PC-3 (cell line): ENCODE measurements at regions of chr2 and their contacts with region 1.

Region 1: GRCh38 chr2:100818606-100819369 is 1.2 kb upstream of the NPAS2 start:
- DNase-seq: peak; percentile 79
- ATAC-seq: peak; percentile 55
- H3K4me3 ChIP-seq: peak overlapping the region; percentile 76
- H3K27ac ChIP-seq: peak overlapping the region; percentile 93
- H3K4me1 ChIP-seq: peaks cover 36% of the 10 kb centered on the region
- H3K27me3 ChIP-seq: no peaks in the 10 kb centered on the region
- CTCF ChIP-seq: peak; percentile 60

Region 2: DNA sequence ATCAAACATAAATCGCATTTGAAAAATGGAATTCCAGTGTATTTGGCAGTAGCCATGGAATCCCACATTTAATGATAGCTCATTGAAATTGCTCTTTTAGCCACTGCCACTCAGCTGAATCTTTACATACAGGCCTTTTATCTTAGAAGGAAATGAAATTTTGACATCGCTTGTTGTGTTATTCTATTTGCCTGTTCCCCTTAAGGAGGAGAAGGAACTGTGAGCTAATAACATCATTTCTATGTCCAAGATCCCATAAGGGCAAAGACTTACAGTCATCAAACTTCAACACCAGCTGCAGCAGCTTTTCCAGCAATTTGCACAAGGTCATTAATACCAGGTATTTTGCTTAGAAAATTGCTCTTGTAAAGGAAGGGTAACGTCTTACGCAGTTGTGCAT is 262.0 kb before region 1 on chr2:
- CTCF ChIA-PET with region 1: no interaction called
- POLR2A ChIA-PET with region 1: no interaction called
- intact Hi-C with region 1: no loop called
- DNase-seq: no peak
- ATAC-seq: no peak
- H3K4me3 ChIP-seq: no peak overlapping the region
- H3K27ac ChIP-seq: no peak overlapping the region
- H3K4me1 ChIP-seq: peaks cover 8% of the 10 kb centered on the region
- H3K27me3 ChIP-seq: no peaks in the 10 kb centered on the region
- CTCF ChIP-seq: no peak

Region 3: DNA sequence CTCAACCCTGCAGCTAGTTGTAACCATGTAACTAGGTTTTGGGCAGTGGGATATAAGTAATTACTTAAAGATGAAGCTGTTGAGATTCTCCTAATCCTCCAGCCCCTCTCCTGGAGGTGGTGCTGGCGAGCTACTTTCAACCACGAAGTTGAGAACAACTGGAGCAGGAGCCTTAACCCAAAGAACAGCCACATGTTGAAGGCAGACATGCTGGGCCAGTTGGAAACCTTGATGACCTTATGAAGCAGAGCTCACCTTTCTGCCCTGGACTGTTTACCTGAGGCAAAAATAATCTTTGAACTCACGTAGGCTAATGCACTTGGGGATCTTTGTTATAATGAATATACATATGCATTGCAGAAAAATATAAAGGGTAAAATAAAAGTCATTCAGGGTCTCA is 88.4 kb before region 1 on chr2:
- CTCF ChIA-PET with region 1: interaction called, 23 read pairs
- POLR2A ChIA-PET with region 1: no interaction called
- intact Hi-C with region 1: loop called (anchors 1 kb)
- DNase-seq: peak; percentile 88
- ATAC-seq: peak; percentile 60
- H3K4me3 ChIP-seq: no peak overlapping the region
- H3K27ac ChIP-seq: peak overlapping the region; percentile 12; the same call in 1 of the 2 replicates
- H3K4me1 ChIP-seq: peaks cover 29% of the 10 kb centered on the region
- H3K27me3 ChIP-seq: no peaks in the 10 kb centered on the region
- CTCF ChIP-seq: peak; percentile 92

Region 4: DNA sequence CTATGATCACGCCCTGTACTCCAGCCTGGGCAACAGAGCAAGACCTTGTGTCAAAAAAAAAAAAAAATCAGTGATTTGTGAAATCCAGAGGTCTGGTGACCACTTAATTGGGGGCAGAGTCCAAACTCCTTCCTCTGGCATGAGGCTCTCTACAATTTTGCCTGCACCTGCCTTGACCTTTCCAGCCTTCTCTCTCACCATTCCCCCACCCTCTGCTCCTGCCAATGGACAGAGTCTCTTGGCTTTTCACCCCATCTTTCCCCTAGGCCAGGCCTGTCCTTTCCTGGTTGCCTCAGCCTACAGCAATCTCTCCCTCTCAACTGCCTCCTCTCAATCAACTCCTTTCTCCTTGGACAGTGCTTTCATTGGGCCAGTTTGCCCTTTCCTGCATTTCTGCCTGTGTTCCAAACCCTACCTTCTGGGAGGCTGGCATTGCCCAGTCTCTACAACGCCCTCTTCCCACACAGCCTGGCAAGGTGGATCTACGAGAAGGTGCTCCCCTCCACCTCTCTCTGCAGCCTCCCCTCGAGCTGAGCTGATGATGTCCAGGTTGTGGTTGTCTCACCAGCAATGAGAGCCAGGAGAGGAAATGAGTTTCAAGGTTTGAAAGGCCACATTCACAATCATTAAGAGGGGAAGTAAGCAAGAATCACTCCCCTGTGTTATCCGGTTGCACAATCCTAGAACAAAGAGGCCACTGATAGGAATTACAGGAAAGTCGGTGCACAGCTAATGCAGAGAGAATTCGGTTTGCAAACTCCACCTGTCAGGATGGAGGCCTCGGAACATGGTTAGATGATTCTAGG is 38.4 kb before region 1 on chr2:
- CTCF ChIA-PET with region 1: no interaction called
- POLR2A ChIA-PET with region 1: interaction called, 14 read pairs
- intact Hi-C with region 1: loop called (anchors 1 kb)
- DNase-seq: peak; percentile 96
- ATAC-seq: peak; percentile 84
- H3K4me3 ChIP-seq: no peak overlapping the region; the same call in 1 of the 2 replicates
- H3K27ac ChIP-seq: peak overlapping the region; percentile 99
- H3K4me1 ChIP-seq: peaks cover 48% of the 10 kb centered on the region
- H3K27me3 ChIP-seq: no peaks in the 10 kb centered on the region
- CTCF ChIP-seq: no peak

Region 5: GRCh38 chr2:100832885-100833284 is 14.1 kb after region 1 on chr2:
- CTCF ChIA-PET with region 1: interaction called, 3 read pairs
- POLR2A ChIA-PET with region 1: interaction called, 12 read pairs
- intact Hi-C with region 1: no loop called
- DNase-seq: peak; percentile 26
- ATAC-seq: peak; percentile 58
- H3K4me3 ChIP-seq: no peak overlapping the region
- H3K27ac ChIP-seq: no peak overlapping the region
- H3K4me1 ChIP-seq: peaks cover 15% of the 10 kb centered on the region
- H3K27me3 ChIP-seq: no peaks in the 10 kb centered on the region
- CTCF ChIP-seq: no peak

Region 6: DNA sequence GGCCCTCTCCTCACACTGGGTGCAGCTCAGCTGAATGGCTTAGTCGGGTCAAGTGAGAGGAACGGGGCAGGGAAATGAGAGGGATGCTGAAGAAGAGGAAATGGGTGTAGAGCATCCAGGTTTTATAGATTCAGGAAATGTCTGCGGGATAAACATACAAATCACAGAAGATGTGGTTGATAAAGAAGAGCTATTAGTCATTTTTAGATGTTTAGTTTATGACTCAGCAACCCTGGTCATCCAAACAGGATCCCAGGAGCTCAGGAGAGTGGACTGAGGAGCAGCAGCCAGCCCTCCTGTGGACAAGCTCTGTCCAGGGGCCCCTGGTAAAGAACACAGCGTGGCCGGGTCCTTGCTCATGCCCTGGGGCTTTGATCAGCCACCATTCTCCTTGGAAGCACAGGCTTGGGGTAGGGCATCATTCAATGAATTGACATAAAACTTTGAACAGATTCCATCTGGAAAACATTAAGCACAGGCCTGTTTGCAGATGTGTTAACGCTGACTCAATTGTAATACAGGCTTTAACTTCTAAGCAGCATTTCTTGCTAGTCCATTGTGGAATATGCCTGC is 84.1 kb after region 1 on chr2:
- CTCF ChIA-PET with region 1: interaction called, 3 read pairs
- POLR2A ChIA-PET with region 1: interaction called, 3 read pairs
- intact Hi-C with region 1: loop called (anchors 2 kb)
- DNase-seq: peak; percentile 97
- ATAC-seq: peak; percentile 85
- H3K4me3 ChIP-seq: no peak overlapping the region; the same call in 1 of the 2 replicates
- H3K27ac ChIP-seq: peak overlapping the region; percentile 100
- H3K4me1 ChIP-seq: peaks cover 57% of the 10 kb centered on the region
- H3K27me3 ChIP-seq: no peaks in the 10 kb centered on the region
- CTCF ChIP-seq: peak; percentile 29; the same call in 1 of the 2 replicates